ENCODE measurements at regions of chr16 and their contacts with region 1.

Region 1: DNA sequence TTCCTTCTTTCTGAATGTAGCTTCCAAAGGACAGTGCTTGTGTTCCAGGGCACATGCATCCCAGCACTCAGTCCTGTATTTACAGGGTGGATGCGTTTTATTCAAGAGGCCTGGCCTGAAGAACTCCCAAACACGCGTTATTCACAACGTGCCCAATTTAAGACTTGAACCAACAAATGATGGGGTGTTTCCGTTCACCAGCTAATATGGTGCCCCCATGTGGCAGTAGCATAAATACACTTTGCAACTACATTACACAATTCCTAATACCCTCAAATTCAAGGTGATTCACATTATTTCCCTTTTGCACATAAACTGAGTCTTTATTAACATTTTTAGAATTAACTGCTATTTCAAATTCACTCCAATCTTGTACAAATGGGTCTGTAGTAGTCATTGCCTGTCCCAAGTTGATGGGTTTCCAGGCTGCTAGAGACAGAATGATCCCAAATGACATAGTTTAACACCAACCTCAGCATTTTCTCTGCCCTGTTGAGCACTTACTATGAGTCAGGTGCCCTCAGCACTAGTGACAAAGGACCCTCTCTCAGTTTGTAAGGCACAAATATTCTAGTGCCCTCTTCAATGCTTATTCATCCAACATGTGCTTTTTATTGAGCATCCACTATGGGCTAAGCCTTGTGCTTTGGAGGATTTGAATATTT is 26.9 kb downstream of the HSD17B2 start:
- DNase-seq: peak; percentile 35
- ATAC-seq: peak; percentile 39
- H3K4me3 Mint-ChIP-seq: no peak overlapping the region
- H3K27ac Mint-ChIP-seq: no peak overlapping the region
- H3K4me1 Mint-ChIP-seq: no peaks in the 10 kb centered on the region
- H3K27me3 Mint-ChIP-seq: peaks cover 27% of the 10 kb centered on the region

Region 2: GRCh38 chr16:81823111-81823510 is 238.9 kb before region 1 on chr16:
- CTCF ChIA-PET with region 1: no interaction called
- POLR2A ChIA-PET with region 1: no interaction called
- intact Hi-C with region 1: no loop called
- DNase-seq: no peak
- ATAC-seq: no peak
- H3K4me3 Mint-ChIP-seq: no peak overlapping the region
- H3K27ac Mint-ChIP-seq: no peak overlapping the region
- H3K4me1 Mint-ChIP-seq: peaks cover 1% of the 10 kb centered on the region
- H3K27me3 Mint-ChIP-seq: no peaks in the 10 kb centered on the region

Region 3: GRCh38 chr16:81885976-81886586 is 175.9 kb before region 1 on chr16:
- CTCF ChIA-PET with region 1: no interaction called
- POLR2A ChIA-PET with region 1: no interaction called
- intact Hi-C with region 1: loop called (anchors 1 to 10 kb)
- DNase-seq: peak; percentile 42
- ATAC-seq: peak; percentile 71
- H3K4me3 Mint-ChIP-seq: no peak overlapping the region
- H3K27ac Mint-ChIP-seq: no peak overlapping the region
- H3K4me1 Mint-ChIP-seq: no peaks in the 10 kb centered on the region
- H3K27me3 Mint-ChIP-seq: no peaks in the 10 kb centered on the region

Region 4: GRCh38 chr16:81896900-81897299 is 165.1 kb before region 1 on chr16:
- CTCF ChIA-PET with region 1: no interaction called
- POLR2A ChIA-PET with region 1: no interaction called
- intact Hi-C with region 1: loop called in 1 of 2 experiments (anchors 10 kb)
- DNase-seq: no peak
- ATAC-seq: no peak
- H3K4me3 Mint-ChIP-seq: no peak overlapping the region
- H3K27ac Mint-ChIP-seq: no peak overlapping the region
- H3K4me1 Mint-ChIP-seq: no peaks in the 10 kb centered on the region
- H3K27me3 Mint-ChIP-seq: peaks cover 1% of the 10 kb centered on the region

Region 5: DNA sequence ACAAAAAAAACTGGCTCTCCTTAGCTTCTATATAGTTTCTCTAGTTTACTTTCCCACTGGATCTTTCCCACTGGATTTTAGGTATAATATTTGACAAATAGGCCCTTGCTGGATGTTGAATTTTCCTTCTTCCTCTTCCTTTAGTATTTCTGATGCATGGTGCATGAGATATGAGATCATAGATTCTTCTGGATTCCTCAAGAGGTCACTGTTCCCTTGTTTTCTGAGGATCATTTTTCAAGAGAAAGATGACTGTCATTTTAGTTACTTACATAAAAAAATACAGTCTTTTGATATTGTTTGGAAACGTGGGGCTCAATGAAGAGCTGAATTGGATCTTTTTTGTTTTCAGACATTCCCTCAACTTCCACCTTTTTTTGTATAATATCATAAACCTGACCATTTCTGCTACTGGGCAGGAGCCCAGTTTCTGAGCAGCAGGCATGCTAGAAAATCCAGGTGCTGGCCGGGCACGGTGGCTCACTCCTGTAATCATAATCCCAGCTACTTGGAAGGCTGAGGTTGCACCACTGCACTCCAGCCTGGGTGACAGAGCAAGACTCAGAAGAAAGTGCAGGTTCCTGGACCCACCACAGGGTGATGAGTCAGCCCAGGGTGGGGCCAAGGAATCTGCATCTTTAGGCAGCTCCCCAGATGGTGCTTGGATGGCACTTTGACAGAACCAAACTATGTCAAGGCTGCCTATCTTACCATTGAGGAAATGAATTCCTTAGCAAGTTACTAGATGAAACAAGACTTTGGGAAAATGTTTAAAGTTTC is 121.0 kb before region 1 on chr16:
- CTCF ChIA-PET with region 1: interaction called, 3 read pairs
- POLR2A ChIA-PET with region 1: no interaction called
- intact Hi-C with region 1: loop called (anchors 5 kb)
- DNase-seq: peak; percentile 29
- ATAC-seq: no peak
- H3K4me3 Mint-ChIP-seq: no peak overlapping the region
- H3K27ac Mint-ChIP-seq: no peak overlapping the region
- H3K4me1 Mint-ChIP-seq: no peaks in the 10 kb centered on the region
- H3K27me3 Mint-ChIP-seq: no peaks in the 10 kb centered on the region

Region 6: DNA sequence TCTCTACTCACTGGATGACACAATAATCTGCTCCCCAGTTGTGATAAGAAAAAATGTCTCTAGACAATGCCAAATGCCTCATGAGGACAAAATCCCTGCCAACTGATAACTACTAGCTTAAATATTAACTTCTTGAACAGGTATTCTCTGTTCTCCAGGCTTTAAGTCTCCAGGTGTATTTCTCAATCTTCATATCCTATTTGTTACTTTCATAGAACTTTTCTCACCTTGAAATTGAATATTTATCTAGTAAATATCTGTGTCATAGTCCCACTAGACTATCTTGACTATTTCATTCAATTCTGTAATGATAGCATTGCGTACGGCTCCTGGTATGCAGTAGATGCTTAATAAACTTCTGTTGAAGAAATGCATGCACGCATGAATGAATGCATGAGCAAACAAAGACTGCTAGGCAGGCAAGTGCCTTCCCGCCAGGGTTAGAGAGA is 11.1 kb before region 1 on chr16:
- CTCF ChIA-PET with region 1: interaction called, 10 read pairs
- POLR2A ChIA-PET with region 1: no interaction called
- intact Hi-C with region 1: no loop called
- DNase-seq: no peak
- ATAC-seq: no peak
- H3K4me3 Mint-ChIP-seq: no peak overlapping the region
- H3K27ac Mint-ChIP-seq: no peak overlapping the region
- H3K4me1 Mint-ChIP-seq: no peaks in the 10 kb centered on the region
- H3K27me3 Mint-ChIP-seq: peaks cover 17% of the 10 kb centered on the region

Region 7: GRCh38 chr16:82506692-82507670 is 445.0 kb after region 1 on chr16:
- CTCF ChIA-PET with region 1: no interaction called
- POLR2A ChIA-PET with region 1: no interaction called
- intact Hi-C with region 1: no loop called
- DNase-seq: no peak
- ATAC-seq: no peak
- H3K4me3 Mint-ChIP-seq: no peak overlapping the region
- H3K27ac Mint-ChIP-seq: no peak overlapping the region
- H3K4me1 Mint-ChIP-seq: no peaks in the 10 kb centered on the region
- H3K27me3 Mint-ChIP-seq: peaks cover 3% of the 10 kb centered on the region

Measured in activated CD4-positive, alpha-beta T cell treated with anti-CD3 and anti-CD28 coated beads for 36 hours (primary cell).